Heart left ventricle (tissue), 16 donors: ENCODE measurements at regions of chr6 and their contacts with region 1.

Region 1: GRCh38 chr6:33105916-33106871 is 30.4 kb downstream of the HLA-DPB1 start:
- DNase-seq: no peak
- ATAC-seq: no peak
- H3K4me3 ChIP-seq: no peak overlapping the region
- H3K27ac ChIP-seq: no peak overlapping the region
- H3K4me1 ChIP-seq: no peaks in the 10 kb centered on the region
- H3K27me3 ChIP-seq: peaks cover 0 to 17% (median 0%) of the 10 kb centered on the region in 9 donors
- CTCF ChIP-seq: no peak
- POLR2A ChIP-seq: no peak

Region 2: DNA sequence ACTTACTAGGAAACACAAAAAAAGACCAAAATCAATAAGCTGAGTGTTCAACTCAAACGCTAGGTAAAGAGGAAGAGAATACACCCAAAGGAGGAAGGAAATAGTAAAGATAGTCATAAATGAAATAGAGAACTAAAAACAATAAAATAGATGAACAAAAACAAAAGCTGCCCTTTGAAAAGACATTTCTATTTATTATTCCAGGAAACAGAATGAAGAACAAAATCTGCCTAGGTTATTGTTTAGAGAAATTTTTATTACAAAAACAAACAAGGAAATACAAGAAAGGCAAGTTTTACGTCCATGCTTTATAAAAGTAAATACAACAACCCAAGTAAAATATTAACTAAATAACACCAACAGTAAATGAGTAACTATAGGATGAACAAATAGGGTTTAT is 185.5 kb before region 1 on chr6:
- intact Hi-C with region 1: loop called in 1 of 10 experiments (anchors 5 kb)
- DNase-seq: no peak
- ATAC-seq: no peak
- H3K4me3 ChIP-seq: no peak overlapping the region
- H3K27ac ChIP-seq: peak overlapping the region in 1 of 12 donors; percentile 42
- H3K4me1 ChIP-seq: peaks cover 0 to 12% (median 0%) of the 10 kb centered on the region in 12 donors
- H3K27me3 ChIP-seq: peaks cover 0 to 23% (median 0%) of the 10 kb centered on the region in 9 donors
- CTCF ChIP-seq: no peak
- POLR2A ChIP-seq: no peak

Region 3: DNA sequence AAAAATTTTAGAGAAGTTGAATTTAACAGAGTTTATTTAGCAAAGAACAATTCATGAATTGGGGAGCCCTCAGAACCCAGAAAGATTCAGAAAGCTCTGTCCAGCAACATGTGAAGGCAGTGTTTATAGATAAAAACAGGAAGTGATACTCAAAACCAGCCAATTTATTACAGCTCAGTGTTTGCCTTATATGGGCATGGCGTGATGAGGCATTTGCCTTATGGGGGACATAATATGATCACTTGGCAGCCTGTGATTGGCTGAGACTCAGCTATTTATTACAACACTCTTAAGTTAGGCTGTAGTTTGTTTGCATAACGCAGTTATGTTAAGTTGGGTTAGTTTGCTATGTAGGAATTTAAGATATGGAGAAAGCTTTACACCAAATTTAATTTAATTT is 44.2 kb before region 1 on chr6:
- intact Hi-C with region 1: no loop called
- DNase-seq: no peak
- ATAC-seq: no peak
- H3K4me3 ChIP-seq: no peak overlapping the region
- H3K27ac ChIP-seq: peak overlapping the region in 1 of 12 donors; percentile 27
- H3K4me1 ChIP-seq: peaks cover 0 to 22% (median 0%) of the 10 kb centered on the region in 12 donors
- H3K27me3 ChIP-seq: no peaks in the 10 kb centered on the region
- CTCF ChIP-seq: no peak
- POLR2A ChIP-seq: no peak

Region 4: GRCh38 chr6:33235221-33235634 is 129.0 kb after region 1 on chr6:
- intact Hi-C with region 1: loop called in 1 of 10 experiments (anchors 5 kb)
- DNase-seq: no peak
- ATAC-seq: no peak
- H3K4me3 ChIP-seq: no peak overlapping the region
- H3K27ac ChIP-seq: no peak overlapping the region
- H3K4me1 ChIP-seq: no peaks in the 10 kb centered on the region
- H3K27me3 ChIP-seq: peaks cover 0 to 36% (median 6%) of the 10 kb centered on the region in 9 donors
- CTCF ChIP-seq: no peak
- POLR2A ChIP-seq: no peak